ENCODE measurements at regions of chr21 and their contacts with region 1.

Region 1: DNA sequence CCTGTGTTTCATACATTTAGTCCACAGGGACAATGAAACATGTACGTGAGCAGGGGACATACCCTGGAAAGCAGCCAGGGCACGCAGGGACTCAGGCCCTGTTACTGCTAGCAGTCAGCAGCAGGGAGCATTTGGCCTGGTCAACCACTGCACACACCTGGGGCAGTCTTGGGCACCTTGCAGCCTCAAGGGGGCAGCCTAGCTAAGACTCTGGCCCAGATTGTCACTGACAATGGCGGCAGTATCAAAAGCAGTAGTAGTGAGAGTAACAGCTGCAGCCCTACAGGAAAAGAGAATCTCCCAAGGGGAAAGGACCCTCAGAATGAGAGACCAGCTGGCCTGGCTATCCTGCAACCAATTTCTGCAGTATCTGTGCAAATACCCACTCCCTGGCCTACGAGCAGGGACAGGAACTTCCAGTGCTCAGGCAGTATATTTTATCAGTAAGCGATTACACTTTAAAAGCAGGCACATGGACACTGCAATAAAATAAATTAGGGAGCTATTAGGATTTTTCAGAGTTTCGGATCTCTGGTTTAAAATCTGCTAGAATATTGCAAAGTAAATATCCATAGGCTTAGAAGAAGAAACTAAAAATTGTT is 475.6 kb downstream of the LTN1 start:
- DNase-seq: peak; percentile 47
- H3K4me3 ChIP-seq: no peak overlapping the region
- H3K27ac ChIP-seq: no peak overlapping the region
- H3K4me1 ChIP-seq: peaks cover under 1% of the 10 kb centered on the region
- H3K27me3 ChIP-seq: no peaks in the 10 kb centered on the region
- CTCF ChIP-seq: peak; percentile 59 to 91

Region 2: DNA sequence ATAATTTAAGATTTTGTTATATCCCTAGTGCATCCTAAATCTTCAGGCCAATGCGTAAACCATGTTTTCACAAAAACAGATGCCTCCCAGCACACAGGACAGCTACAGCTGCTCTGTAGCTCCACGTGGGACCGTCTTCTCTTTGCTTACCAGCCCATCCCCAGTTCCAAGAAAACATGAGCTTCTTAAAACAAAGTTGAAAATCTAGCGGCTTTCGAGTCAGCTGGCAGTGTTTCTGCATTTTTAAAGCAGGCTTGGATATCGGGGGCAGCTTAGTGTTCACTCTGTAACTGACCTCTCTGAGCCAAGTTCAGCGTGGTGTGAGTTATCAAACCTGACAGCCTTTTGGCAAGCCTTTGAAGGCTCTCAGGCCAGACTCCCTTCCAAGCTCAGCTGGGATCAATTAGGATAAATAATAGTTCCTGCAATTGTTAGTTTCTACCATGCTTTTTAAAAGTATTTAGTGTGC is 405.9 kb before region 1 on chr21:
- CTCF ChIA-PET with region 1: no interaction called
- dilution Hi-C with region 1: no loop called
- in situ Hi-C with region 1: no loop called
- intact Hi-C with region 1: no loop called
- DNase-seq: no peak
- H3K4me3 ChIP-seq: no peak overlapping the region
- H3K27ac ChIP-seq: no peak overlapping the region
- H3K4me1 ChIP-seq: no peaks in the 10 kb centered on the region
- H3K27me3 ChIP-seq: no peaks in the 10 kb centered on the region
- CTCF ChIP-seq: no peak

Region 3: DNA sequence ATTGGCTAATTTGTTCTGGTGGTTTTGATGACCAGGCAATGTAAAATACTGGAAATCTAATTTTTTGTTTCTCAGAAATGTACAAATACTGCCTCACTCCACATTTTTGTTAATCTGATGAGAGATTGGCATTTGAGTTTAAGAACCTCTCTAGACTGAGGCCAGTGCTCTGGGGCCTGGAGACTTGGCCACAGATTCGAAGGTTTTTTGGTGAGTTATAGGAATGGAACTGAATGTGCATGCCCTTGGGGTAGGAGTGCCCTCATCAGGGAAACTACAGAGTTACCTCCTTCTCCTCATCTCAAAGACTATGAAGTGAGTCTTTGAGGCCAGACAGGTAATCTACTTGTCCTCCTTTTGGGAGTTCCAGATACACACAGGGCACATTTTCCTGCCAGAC is 127.7 kb after region 1 on chr21:
- CTCF ChIA-PET with region 1: no interaction called
- dilution Hi-C with region 1: no loop called
- in situ Hi-C with region 1: no loop called
- intact Hi-C with region 1: loop called (anchors 1 kb)
- DNase-seq: peak; percentile 83
- H3K4me3 ChIP-seq: no peak overlapping the region
- H3K27ac ChIP-seq: peak overlapping the region; percentile 6
- H3K4me1 ChIP-seq: peaks cover 14% of the 10 kb centered on the region
- H3K27me3 ChIP-seq: no peaks in the 10 kb centered on the region
- CTCF ChIP-seq: peak; percentile 7 to 42